ENCODE measurements at regions of chr14 and their contacts with region 1.

Region 1: DNA sequence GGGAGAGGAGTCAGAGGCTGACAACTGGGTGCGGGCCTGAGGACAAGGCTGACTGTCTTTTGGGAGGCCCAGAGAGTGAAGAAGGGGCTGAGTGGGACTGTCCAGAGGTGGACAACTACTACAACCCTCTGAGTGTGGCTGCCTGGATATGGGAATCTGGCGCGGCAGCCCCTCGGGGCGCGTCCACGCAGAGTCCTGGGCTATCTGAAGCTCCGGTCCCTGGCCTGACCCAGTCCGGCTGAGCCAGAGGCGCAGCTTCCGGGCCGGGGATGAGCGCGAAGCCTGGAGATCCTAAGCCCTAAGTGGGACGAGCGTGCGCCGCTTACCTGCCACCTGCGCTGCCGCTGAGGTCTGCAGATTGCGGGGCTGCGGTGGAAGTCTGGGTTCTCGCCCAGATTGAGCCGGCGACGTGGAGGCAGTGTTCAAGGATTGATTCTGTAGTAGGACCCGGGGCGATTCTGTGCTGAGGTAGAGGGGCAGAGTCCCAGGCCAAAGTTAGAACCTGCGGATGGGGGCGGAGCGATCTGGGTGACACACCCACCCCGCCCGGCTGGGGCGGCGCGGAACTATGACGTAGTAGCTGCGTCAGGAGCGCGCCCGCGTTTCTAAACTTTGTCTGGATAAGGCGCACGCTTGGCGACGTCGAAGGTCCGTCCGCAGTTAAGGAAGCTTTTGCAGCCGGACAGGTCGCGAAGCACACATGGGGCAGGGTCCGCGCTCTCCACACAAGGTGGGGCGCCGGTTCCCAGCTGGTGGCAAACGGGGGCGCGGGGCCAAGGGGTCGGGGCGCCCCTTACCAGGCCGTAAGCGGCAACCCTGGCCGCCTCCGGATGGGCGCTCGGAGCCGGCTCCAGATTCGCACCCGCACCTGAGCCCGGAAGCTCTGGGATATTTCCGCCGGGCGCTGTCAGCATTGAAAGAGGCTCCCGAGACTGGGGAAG is at the starts of genes DHRS1 and NOP9:
- DNase-seq: peak; percentile 86 to 95 (median 92)
- ATAC-seq: peak; percentile 93
- H3K4me3 ChIP-seq: peak within 1 kb of the TSS; percentile 83
- H3K4me3 Mint-ChIP-seq: peak within 1 kb of the TSS; percentile 89 to 97 (median 94)
- H3K27ac ChIP-seq: peak within 1 kb of the TSS; percentile 97
- H3K27ac Mint-ChIP-seq: peak within 1 kb of the TSS; percentile 91 to 98 (median 96)
- H3K4me1 ChIP-seq: peaks cover 19 to 43% of the 10 kb centered on the region in 2 donors
- H3K4me1 Mint-ChIP-seq: peaks cover 28 to 67% (median 55%) of the 10 kb centered on the region in 7 donors
- H3K27me3 ChIP-seq: no peaks in the 10 kb centered on the region
- H3K27me3 Mint-ChIP-seq: no peaks in the 10 kb centered on the region
- total RNA-seq, gene DHRS1: 25.2 to 37.0 (median 33.3) TPM
- total RNA-seq, gene NOP9: 22.7 to 39.5 (median 29.8) TPM

Region 2: DNA sequence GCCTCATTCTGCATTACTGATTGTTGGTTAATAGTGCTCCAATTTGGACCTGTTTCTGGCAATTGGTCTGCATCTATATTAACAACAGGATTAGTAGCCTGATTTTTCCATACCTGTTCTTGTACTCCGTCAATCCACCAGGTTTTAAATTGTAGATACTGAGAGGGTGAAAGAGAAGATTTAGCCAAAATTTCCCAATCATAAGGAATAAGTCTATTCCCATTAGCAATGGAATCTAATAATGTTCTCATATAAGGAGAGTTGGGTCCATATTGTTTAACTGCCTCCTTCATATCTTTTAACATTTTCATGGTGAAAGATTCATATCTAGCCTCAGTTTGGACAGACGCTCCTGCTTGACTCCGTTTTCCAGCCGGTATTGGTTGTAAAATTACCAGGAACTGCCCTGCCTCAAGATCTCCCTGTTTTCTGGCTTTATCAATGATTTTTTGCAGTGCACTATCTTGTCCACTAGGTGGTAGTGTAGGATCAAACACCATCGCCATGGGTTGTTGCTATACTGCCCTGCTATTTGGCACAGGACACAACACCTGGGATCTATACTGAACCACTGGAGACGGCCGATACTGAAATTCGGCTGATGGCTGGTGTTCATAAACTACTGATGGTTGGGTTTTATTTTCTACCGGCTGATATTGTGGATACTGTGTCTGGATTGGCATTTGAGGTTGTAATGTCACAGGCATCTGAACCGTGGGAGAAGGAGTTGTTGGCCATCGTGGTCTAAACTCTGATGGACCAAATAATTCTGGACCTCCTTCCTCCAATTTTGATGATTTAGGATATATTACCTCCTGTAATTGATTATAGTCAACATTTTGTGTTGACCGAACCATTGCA is 285.6 kb before region 1 on chr14:
- CTCF ChIA-PET with region 1: no interaction called
- POLR2A ChIA-PET with region 1: no interaction called
- intact Hi-C with region 1: loop called in 1 of 2 experiments (anchors 5 kb)
- DNase-seq: peak in 8 of 9 donors; percentile 17 to 76 (median 67)
- ATAC-seq: peak; percentile 94
- H3K4me3 ChIP-seq: no peak overlapping the region
- H3K4me3 Mint-ChIP-seq: no peak overlapping the region
- H3K27ac ChIP-seq: no peak overlapping the region
- H3K27ac Mint-ChIP-seq: no peak overlapping the region
- H3K4me1 ChIP-seq: peaks cover 0 to 6% of the 10 kb centered on the region in 2 donors
- H3K4me1 Mint-ChIP-seq: peaks cover 8 to 28% (median 25%) of the 10 kb centered on the region in 7 donors
- H3K27me3 ChIP-seq: no peaks in the 10 kb centered on the region
- H3K27me3 Mint-ChIP-seq: peaks cover 0 to 15% (median 0%) of the 10 kb centered on the region in 5 donors

Region 3: GRCh38 chr14:24135834-24136542 is 163.5 kb before region 1 on chr14 and contains the start of gene PSME1:
- CTCF ChIA-PET with region 1: no interaction called
- POLR2A ChIA-PET with region 1: no interaction called
- intact Hi-C with region 1: loop called in 1 of 2 experiments (anchors 1 kb)
- DNase-seq: peak; percentile 88 to 97 (median 92)
- ATAC-seq: peak; percentile 99
- H3K4me3 ChIP-seq: peak within 1 kb of the TSS; percentile 83
- H3K4me3 Mint-ChIP-seq: peak within 1 kb of the TSS; percentile 88 to 95 (median 92)
- H3K27ac ChIP-seq: peak within 1 kb of the TSS; percentile 97
- H3K27ac Mint-ChIP-seq: peak within 1 kb of the TSS; percentile 86 to 98 (median 93)
- H3K4me1 ChIP-seq: peaks cover 16 to 37% of the 10 kb centered on the region in 2 donors
- H3K4me1 Mint-ChIP-seq: peaks cover 48 to 71% (median 64%) of the 10 kb centered on the region in 7 donors
- H3K27me3 ChIP-seq: no peaks in the 10 kb centered on the region
- H3K27me3 Mint-ChIP-seq: no peaks in the 10 kb centered on the region
- total RNA-seq, gene PSME1: 189 to 583 (median 202) TPM

Region 4: GRCh38 chr14:24195191-24196070 is 104.1 kb before region 1 on chr14 and contains the start of gene TM9SF1:
- CTCF ChIA-PET with region 1: no interaction called
- POLR2A ChIA-PET with region 1: no interaction called
- intact Hi-C with region 1: loop called in 1 of 2 experiments (anchors 1 kb)
- DNase-seq: peak; percentile 86 to 92 (median 90)
- ATAC-seq: peak; percentile 90
- H3K4me3 ChIP-seq: peak within 1 kb of the TSS; percentile 74
- H3K4me3 Mint-ChIP-seq: peak within 1 kb of the TSS; percentile 88 to 97 (median 93)
- H3K27ac ChIP-seq: peak within 1 kb of the TSS; percentile 99
- H3K27ac Mint-ChIP-seq: peak within 1 kb of the TSS; percentile 88 to 98 (median 98)
- H3K4me1 ChIP-seq: peaks cover 14 to 16% of the 10 kb centered on the region in 2 donors
- H3K4me1 Mint-ChIP-seq: peaks cover 38 to 69% (median 59%) of the 10 kb centered on the region in 7 donors
- H3K27me3 ChIP-seq: no peaks in the 10 kb centered on the region
- H3K27me3 Mint-ChIP-seq: no peaks in the 10 kb centered on the region
- total RNA-seq, gene TM9SF1: 16.2 to 40.5 (median 19.2) TPM

Region 5: GRCh38 chr14:24241829-24242443 is 57.6 kb before region 1 on chr14:
- CTCF ChIA-PET with region 1: interaction called, 140 read pairs
- POLR2A ChIA-PET with region 1: interaction called, 125 read pairs
- intact Hi-C with region 1: loop called (anchors 1 kb)
- DNase-seq: peak in 7 of 9 donors; percentile 94 to 98 (median 97)
- ATAC-seq: peak; percentile 89
- H3K4me3 ChIP-seq: peak overlapping the region; percentile 78
- H3K4me3 Mint-ChIP-seq: peak overlapping the region; percentile 84 to 99 (median 98)
- H3K27ac ChIP-seq: peak overlapping the region; percentile 98
- H3K27ac Mint-ChIP-seq: peak overlapping the region; percentile 98 to 100 (median 100)
- H3K4me1 ChIP-seq: peaks cover 40 to 41% of the 10 kb centered on the region in 2 donors
- H3K4me1 Mint-ChIP-seq: peaks cover 42 to 71% (median 62%) of the 10 kb centered on the region in 7 donors
- H3K27me3 ChIP-seq: no peaks in the 10 kb centered on the region
- H3K27me3 Mint-ChIP-seq: no peaks in the 10 kb centered on the region

Region 6: GRCh38 chr14:24310646-24311604 is 11.4 kb after region 1 on chr14 and contains the start of gene LTB4R:
- CTCF ChIA-PET with region 1: interaction called, 42 read pairs
- POLR2A ChIA-PET with region 1: interaction called, 79 read pairs
- intact Hi-C with region 1: loop called (anchors 1 kb)
- DNase-seq: peak; percentile 61 to 79 (median 73)
- ATAC-seq: peak; percentile 85
- H3K4me3 ChIP-seq: peak within 1 kb of the TSS; percentile 50
- H3K4me3 Mint-ChIP-seq: peak within 1 kb of the TSS; percentile 77 to 91 (median 85)
- H3K27ac ChIP-seq: peak within 1 kb of the TSS; percentile 76
- H3K27ac Mint-ChIP-seq: peak within 1 kb of the TSS; percentile 86 to 95 (median 89)
- H3K4me1 ChIP-seq: peaks cover 60 to 65% of the 10 kb centered on the region in 2 donors
- H3K4me1 Mint-ChIP-seq: peaks cover 58 to 79% (median 72%) of the 10 kb centered on the region in 7 donors
- H3K27me3 ChIP-seq: no peaks in the 10 kb centered on the region
- H3K27me3 Mint-ChIP-seq: no peaks in the 10 kb centered on the region
- total RNA-seq, gene LTB4R: 14.1 to 28.8 (median 26.3) TPM

Region 7: DNA sequence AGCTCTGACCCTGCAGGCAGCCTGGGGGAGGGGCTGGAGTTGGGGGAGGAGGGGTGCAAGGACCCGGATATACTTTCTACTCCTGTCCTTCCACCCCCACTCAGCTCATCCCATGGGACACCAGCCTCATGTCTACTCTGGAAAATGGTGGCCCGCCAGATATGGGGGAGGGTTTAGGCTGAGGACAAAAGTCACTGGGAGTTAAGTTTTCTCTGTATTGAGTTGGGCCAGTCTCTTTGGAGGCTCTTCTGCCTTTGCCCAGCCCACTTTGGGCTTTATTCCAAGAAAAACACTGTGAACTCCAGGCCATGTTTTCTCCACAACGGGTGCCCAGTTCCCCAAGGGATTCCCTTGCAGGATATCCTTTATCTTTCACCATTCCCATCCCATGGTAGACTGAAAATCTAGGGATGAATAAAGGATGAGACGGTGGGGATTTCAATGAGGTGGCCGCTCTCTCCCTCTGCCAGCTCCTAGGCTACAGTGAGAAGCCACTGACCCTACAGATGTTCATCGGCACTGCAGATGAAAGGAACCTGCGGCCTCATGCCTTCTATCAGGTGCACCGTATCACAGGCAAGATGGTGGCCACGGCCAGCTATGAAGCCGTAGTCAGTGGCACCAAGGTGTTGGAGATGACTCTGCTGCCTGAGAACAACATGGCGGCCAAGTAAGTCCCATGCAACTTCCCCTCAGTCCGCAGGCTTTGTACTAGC is 73.3 kb after region 1 on chr14:
- CTCF ChIA-PET with region 1: no interaction called
- POLR2A ChIA-PET with region 1: no interaction called
- intact Hi-C with region 1: no loop called
- DNase-seq: no peak
- ATAC-seq: no peak
- H3K4me3 ChIP-seq: no peak overlapping the region
- H3K4me3 Mint-ChIP-seq: no peak overlapping the region
- H3K27ac ChIP-seq: no peak overlapping the region
- H3K27ac Mint-ChIP-seq: no peak overlapping the region
- H3K4me1 ChIP-seq: peaks cover 0 to 4% of the 10 kb centered on the region in 2 donors
- H3K4me1 Mint-ChIP-seq: peaks cover 0 to 11% (median 7%) of the 10 kb centered on the region in 7 donors
- H3K27me3 ChIP-seq: no peaks in the 10 kb centered on the region
- H3K27me3 Mint-ChIP-seq: peaks cover 5 to 28% (median 10%) of the 10 kb centered on the region in 5 donors

Region 8: GRCh38 chr14:24535737-24536136 is 236.2 kb after region 1 on chr14:
- CTCF ChIA-PET with region 1: no interaction called
- POLR2A ChIA-PET with region 1: no interaction called
- intact Hi-C with region 1: no loop called
- DNase-seq: no peak
- ATAC-seq: peak; percentile 49
- H3K4me3 ChIP-seq: no peak overlapping the region
- H3K4me3 Mint-ChIP-seq: no peak overlapping the region
- H3K27ac ChIP-seq: no peak overlapping the region
- H3K27ac Mint-ChIP-seq: no peak overlapping the region
- H3K4me1 ChIP-seq: no peaks in the 10 kb centered on the region
- H3K4me1 Mint-ChIP-seq: peaks cover 0 to 7% (median 0%) of the 10 kb centered on the region in 7 donors
- H3K27me3 ChIP-seq: peaks cover 0 to 3% of the 10 kb centered on the region in 2 donors
- H3K27me3 Mint-ChIP-seq: peaks cover 7 to 36% (median 19%) of the 10 kb centered on the region in 5 donors

Region 9: DNA sequence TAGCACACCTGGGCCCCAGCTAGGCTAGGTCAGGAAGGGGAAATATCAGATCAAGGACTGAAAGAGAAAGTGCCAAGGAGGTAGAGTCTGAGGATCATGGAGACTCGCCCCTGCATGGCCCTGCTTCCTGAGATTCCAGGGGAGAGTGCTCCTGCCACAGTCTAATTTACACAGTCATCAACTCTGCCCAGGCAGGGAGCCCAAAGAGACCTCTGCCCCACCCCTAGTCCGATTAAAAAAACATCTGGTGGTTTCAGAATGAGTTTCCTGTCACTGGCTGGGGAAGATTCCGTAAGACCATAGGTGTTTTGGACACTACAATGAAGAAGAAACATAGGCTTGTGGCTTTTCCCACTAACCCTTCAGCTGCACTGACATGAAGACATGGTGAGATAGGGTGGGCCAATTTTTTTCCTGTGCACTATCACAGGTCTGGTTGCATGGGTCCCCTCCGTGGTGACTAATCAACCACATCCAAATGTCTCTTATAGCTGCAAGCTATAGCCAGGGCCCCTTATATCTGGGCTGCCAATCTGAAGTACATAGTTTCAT is 366.0 kb after region 1 on chr14:
- CTCF ChIA-PET with region 1: no interaction called
- POLR2A ChIA-PET with region 1: no interaction called
- intact Hi-C with region 1: no loop called
- DNase-seq: peak in 1 of 9 donors; percentile 50
- ATAC-seq: peak; percentile 72
- H3K4me3 ChIP-seq: peak overlapping the region; percentile 26
- H3K4me3 Mint-ChIP-seq: peak overlapping the region in 6 of 10 donors; percentile 7 to 87 (median 38)
- H3K27ac ChIP-seq: no peak overlapping the region
- H3K27ac Mint-ChIP-seq: peak overlapping the region in 3 of 9 donors; percentile 48 to 94 (median 51)
- H3K4me1 ChIP-seq: peaks cover 10 to 33% of the 10 kb centered on the region in 2 donors
- H3K4me1 Mint-ChIP-seq: peaks cover 9 to 89% (median 12%) of the 10 kb centered on the region in 7 donors
- H3K27me3 ChIP-seq: no peaks in the 10 kb centered on the region
- H3K27me3 Mint-ChIP-seq: peaks cover 0 to 8% (median 5%) of the 10 kb centered on the region in 5 donors

Measured in naive thymus-derived CD4-positive, alpha-beta T cell (primary cell).